ENCODE measurements at regions of chr1 and their contacts with region 1.

Region 1: GRCh38 chr1:32215629-32216480 is 6.3 kb downstream of the TMEM234 start:
- DNase-seq: peak; percentile 69
- CTCF ChIP-seq: peak; percentile 93

Region 2: DNA sequence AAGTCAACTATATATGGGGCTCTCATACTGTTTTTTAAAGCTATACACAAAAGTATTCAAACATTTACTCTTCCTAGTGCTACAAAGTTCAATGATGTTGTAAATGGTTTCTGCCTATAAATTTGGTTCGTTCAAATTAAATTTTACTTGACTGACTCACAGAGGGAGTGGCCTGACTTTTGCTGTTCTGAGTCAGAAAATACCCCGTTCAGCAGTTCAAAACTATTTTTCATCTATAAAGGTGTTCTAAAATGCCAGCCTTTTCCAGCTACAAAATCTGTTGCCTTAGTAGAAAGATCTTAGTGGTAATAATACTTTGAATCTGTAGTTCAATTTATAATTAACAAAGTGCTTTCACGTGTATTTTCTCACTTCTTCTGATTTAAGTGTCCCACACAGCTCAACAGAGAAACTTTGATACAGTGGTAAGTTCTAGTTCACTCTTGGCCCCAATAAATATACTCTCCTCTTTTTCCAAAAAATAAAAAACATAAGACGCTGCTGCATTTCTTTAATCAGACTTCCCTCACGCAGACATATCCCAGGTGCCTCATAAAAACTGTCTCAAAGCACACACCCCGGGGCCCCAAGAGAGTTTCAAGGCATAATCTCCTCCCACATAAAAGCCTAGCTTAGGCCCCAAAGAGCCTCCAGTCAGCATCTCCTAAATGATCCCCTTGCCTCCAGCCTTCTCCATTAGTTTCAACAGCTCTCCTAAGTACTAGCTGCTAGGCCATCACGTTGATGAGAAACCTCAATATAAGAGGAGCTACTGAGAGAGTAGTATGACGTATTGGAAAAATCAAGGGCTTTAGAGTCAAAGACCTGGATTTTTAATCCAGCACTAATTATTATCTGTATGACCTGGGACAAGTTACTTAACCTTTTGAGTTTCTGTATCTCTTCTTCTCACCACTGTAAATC is 280.9 kb before region 1 on chr1:
- CTCF ChIA-PET with region 1: no interaction called
- POLR2A ChIA-PET with region 1: no interaction called
- DNase-seq: no peak
- CTCF ChIP-seq: no peak

Region 3: DNA sequence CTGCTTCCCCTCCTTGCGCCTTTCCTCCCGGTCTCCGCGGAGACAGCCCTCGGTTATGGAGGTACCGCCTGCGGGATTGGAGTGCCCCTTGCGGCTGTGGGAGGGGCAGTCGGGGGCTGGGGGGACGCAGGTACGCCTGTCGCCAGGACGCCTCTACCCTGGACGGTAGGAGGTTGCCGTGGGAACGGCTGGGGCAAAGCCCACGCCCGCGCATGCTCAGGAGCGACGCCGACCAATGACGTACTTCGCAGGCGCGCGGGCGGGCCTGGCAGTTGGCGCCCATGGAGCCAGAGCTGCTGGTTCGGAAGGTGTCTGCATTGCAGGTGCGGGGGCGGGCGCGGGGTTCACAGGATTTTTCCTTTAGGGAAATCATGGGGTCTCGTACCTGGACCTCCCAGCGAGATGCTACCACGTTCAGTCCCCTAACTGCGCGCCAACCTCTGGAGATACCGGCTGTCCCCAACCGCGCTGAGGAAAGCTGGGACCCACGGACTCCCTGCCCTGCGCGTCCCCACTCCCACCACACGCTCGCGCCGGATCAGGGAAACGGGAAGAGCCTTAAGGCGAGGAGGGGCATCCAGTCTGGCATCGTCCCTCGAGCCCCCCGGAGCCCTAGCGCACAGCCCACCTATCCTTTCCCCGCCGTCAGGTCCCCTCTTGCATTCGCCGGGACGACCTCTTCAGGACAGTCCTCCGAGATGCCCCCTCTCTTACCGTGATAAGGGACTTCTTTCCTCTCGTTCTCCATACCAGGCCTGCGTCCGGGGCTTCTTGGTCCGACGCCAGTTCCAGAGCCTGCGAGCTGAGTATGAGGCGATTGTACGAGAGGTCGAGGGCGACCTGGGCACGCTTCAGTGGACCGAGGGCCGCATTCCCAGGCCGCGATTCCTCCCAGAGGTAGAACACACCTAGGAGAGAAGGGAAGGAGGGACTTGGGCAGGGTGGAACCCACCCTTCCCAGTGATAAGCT is 10.2 kb before region 1 on chr1 and contains the start of gene IQCC:
- CTCF ChIA-PET with region 1: interaction called, 39 read pairs
- POLR2A ChIA-PET with region 1: interaction called, 3 read pairs
- DNase-seq: peak; percentile 95
- CTCF ChIP-seq: no peak

Region 4: DNA sequence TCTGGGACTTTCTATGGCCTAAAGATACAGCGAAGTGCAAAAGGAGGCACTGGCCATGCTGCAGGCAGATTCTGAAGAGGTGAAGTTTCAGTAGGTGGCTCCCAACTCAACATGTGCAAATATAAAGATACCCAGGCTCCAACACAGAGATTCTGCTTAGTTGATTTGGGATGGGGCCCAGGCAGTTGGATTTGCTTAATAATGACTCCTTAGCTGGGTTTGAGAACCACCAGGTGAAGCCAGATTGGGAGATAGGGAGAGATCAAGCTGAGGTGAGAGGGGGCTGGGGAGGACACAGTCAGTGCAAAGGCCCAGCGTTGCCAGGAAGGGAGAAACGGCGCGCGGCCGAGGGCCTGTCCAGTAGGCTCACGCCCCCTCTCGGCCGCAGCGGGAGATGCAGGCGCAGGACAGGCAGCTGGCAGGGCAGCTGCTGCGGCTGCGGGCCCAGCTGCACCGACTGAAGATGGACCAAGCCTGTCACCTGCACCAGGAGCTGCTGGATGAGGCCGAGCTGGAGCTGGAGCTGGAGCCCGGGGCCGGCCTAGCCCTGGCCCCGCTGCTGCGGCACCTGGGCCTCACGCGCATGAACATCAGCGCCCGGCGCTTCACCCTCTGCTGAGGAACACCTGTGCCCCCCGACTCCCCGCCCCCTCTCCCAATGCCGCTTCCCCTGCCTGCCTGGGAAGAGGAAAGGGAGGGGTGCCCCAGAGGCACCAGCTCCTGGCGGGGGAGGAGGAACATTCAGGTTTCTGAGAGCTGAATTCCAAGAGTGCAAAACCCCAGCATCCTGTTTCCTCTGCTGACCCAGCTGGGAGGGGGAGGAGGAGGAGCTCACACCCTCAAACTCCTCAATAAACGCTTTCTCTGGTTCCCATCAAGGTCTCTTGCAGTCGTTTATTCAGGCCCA is 32.4 kb after region 1 on chr1:
- CTCF ChIA-PET with region 1: interaction called, 156 read pairs
- POLR2A ChIA-PET with region 1: no interaction called
- DNase-seq: peak; percentile 87
- CTCF ChIP-seq: peak; percentile 94

Region 5: DNA sequence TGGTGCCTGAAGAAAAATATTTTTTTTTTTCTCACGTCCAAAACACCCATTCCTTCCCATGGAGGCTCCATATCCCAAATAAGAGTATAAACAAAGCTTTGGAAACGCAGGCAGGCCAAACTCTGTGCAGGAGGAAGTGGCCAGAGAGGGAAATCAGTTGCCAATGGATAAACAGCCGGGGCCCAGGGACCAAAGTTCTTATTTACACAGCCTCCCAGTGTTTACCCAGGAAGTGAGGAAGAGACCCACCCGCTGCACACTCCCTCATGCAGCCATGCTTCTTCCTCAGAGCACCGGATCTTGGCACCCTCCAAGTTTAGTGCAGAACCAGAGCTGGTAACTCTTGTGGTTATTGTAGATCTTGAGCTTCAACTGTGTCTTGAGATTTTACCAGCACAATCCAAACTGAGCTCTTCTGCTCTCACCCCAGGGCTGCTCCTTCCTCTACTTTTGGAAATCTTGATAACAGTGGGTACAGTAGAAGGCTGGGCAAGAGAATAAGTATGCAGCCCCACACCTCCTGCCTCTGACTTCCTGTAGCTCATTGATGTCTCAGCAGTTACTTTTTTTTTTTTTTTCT is 105.9 kb after region 1 on chr1:
- CTCF ChIA-PET with region 1: interaction called, 52 read pairs
- POLR2A ChIA-PET with region 1: no interaction called
- DNase-seq: no peak
- CTCF ChIP-seq: no peak

Region 6: GRCh38 chr1:32361674-32362473 is 146.0 kb after region 1 on chr1:
- CTCF ChIA-PET with region 1: interaction called, 10 read pairs
- POLR2A ChIA-PET with region 1: no interaction called
- DNase-seq: peak; percentile 43
- CTCF ChIP-seq: no peak

Measured in GM10248 (cell line).